H1 (cell line): ENCODE measurements at regions of chr1 and their contacts with region 1.

Region 1: DNA sequence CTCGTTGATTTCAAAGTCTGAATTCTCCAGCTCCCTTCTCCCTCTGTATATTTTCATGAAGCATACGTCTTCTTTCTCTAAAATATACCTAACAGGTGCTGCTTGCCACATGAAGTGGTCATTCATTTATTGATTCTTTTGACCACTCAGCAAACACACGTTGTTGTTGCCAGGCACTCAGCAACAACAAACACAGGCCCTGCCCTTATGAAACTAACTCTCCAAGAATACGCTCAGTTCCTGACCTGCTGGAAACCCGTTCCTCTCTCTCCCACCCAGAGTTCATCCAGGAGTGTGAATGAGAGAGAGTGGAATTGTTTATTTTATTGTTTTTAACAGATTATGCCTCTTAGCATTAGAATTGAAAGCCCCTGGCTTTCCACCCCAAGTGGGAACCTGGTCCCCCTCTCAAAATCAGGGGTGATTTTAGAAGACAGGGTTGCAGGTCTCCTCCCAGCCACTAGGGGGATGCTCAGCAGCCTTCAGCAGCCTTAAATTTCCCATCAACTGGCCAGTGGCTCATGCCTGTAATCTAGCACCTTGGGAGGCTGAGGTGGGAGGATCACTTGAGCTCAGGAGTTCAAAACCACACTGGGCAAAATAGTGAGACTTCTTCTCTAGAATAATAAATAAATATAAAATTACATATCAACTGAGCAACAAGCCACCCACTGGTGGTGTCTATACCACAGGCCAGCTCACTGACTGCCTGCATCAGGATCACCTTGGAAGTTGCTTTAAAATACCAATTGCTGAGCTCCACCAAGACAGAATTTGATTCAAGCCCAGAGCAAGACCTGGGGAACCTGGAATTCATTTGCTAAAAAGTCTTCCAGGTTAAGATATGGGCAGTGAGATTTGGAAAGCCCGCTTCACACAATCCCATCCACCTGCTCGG is 181.0 kb upstream of the KLHDC7A start:
- DNase-seq: peak in 1 of 2 experiments; percentile 62
- H3K4me3 ChIP-seq: no peak overlapping the region
- H3K27ac ChIP-seq: peak overlapping the region; percentile 18; the same call in 1 of the 2 replicates
- H3K4me1 ChIP-seq: peaks cover 17 to 36% (median 18%) of the 10 kb centered on the region in 4 experiments
- H3K27me3 ChIP-seq: no peaks in the 10 kb centered on the region
- CTCF ChIP-seq: peak; percentile 75 to 86 (median 84)
- EP300 ChIP-seq: no peak
- POLR2A ChIP-seq: no peak
- RAD21 ChIP-seq: peak; percentile 53 to 71

Region 2: GRCh38 chr1:18261891-18262290 is 37.8 kb before region 1 on chr1:
- CTCF ChIA-PET with region 1: interaction called, 29 read pairs
- POLR2A ChIA-PET with region 1: interaction called, 10 read pairs
- DNase-seq: no peak
- H3K4me3 ChIP-seq: no peak overlapping the region
- H3K27ac ChIP-seq: no peak overlapping the region
- H3K4me1 ChIP-seq: peaks cover 4 to 18% (median 12%) of the 10 kb centered on the region in 4 experiments
- H3K27me3 ChIP-seq: peaks cover 0 to 3% (median 0%) of the 10 kb centered on the region in 4 experiments; a peak in 2 of 7 replicates
- CTCF ChIP-seq: no peak
- EP300 ChIP-seq: no peak
- POLR2A ChIP-seq: no peak
- RAD21 ChIP-seq: no peak

Region 3: DNA sequence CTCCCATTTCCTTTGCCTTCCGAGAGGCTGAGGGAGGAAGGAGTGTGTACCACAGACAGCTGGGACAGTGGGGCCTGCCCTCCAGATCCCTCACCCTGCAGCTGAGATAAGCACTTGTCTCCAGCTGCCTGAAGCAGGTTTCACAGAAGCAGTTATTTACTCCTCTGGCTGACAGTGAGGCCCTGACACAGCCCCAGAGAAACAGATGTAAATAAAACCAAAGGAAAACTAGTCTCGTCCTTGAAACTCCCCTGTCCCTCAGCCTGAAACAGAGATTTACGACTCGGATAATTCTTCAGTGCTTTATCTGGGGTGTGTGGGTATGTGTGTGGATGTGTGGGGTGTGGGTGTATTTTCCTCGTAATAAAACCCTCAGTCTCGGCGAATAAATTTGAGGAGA is 11.0 kb before region 1 on chr1:
- CTCF ChIA-PET with region 1: interaction called, 49 read pairs
- POLR2A ChIA-PET with region 1: interaction called, 19 read pairs
- DNase-seq: no peak
- H3K4me3 ChIP-seq: no peak overlapping the region
- H3K27ac ChIP-seq: no peak overlapping the region; the same call in 1 of the 2 replicates
- H3K4me1 ChIP-seq: peaks cover 3 to 27% (median 16%) of the 10 kb centered on the region in 4 experiments
- H3K27me3 ChIP-seq: no peaks in the 10 kb centered on the region; a peak in 1 of 7 replicates
- CTCF ChIP-seq: no peak
- EP300 ChIP-seq: no peak
- POLR2A ChIP-seq: no peak
- RAD21 ChIP-seq: no peak

Region 4: DNA sequence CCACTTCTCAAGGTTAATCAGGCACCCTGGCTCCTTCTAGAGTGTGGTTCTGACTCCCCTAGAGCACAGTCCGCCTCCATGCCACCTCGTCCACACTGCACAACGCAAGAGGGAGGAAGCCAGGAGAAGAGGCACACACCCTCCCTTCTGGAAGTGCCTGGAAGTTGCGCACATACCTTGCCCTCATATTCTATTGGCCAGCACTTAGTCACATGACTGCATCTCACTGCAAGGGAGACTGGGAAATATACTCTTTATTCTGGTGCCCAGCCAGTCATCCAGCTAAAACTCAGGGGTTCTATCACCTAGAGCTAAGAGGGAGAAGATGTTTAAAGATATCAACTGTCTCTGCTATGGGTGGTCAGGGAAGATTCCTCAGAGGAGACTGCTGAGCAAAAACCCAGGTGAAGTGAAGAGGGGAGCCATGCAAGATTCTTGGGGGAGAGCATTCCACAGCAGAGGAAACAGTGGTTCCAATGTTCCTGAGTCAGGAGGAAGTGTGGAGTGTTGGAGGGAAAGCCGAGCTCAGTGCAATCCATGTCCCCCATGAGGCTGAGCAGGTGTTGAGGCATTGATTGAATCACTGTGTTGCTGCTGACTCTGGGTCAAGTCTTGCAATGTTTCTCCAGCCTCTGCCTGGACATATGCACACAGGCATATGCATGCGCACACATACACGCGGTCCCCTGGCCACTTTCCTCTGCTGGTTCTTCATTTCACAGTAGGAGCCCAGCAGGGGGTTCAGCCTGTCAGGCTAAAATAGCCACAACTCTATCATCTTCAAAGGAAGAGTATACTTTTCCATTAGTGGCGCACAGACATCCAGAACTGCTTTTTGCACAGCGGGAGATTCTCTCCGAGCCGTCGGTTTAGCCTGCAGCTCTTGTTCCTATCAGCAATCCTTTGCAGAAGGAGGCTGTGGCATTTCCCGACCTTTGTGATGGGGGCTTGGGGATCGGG is 158.7 kb after region 1 on chr1:
- CTCF ChIA-PET with region 1: no interaction called
- POLR2A ChIA-PET with region 1: no interaction called
- DNase-seq: no peak
- H3K4me3 ChIP-seq: no peak overlapping the region
- H3K27ac ChIP-seq: no peak overlapping the region
- H3K4me1 ChIP-seq: no peaks in the 10 kb centered on the region; a peak in 1 of 7 replicates
- H3K27me3 ChIP-seq: no peaks in the 10 kb centered on the region; a peak in 2 of 7 replicates
- CTCF ChIP-seq: no peak
- EP300 ChIP-seq: no peak
- POLR2A ChIP-seq: no peak
- RAD21 ChIP-seq: no peak

Region 5: GRCh38 chr1:18486195-18486594 is 186.5 kb after region 1 on chr1:
- CTCF ChIA-PET with region 1: interaction called, 11 read pairs
- POLR2A ChIA-PET with region 1: no interaction called
- DNase-seq: peak; percentile 19 to 74
- H3K4me3 ChIP-seq: no peak overlapping the region
- H3K27ac ChIP-seq: no peak overlapping the region
- H3K4me1 ChIP-seq: peaks cover 0 to 18% (median 8%) of the 10 kb centered on the region in 4 experiments; a peak in 6 of 7 replicates
- H3K27me3 ChIP-seq: no peaks in the 10 kb centered on the region
- CTCF ChIP-seq: peak; percentile 74 to 97 (median 79)
- EP300 ChIP-seq: no peak
- POLR2A ChIP-seq: peak in 1 of 2 experiments; percentile 26; a peak in 1 of 3 replicates
- RAD21 ChIP-seq: peak; percentile 68 to 83